PC-3 (cell line): ENCODE measurements at regions of chr18 and their contacts with region 1.

Region 1: GRCh38 chr18:40868110-40868858 is 1086.8 kb upstream of the PIK3C3 start:
- DNase-seq: peak; percentile 77
- ATAC-seq: peak; percentile 95
- H3K4me3 ChIP-seq: no peak overlapping the region
- H3K27ac ChIP-seq: peak overlapping the region; percentile 98
- H3K4me1 ChIP-seq: peaks cover 18% of the 10 kb centered on the region
- H3K27me3 ChIP-seq: no peaks in the 10 kb centered on the region
- CTCF ChIP-seq: no peak

Region 2: DNA sequence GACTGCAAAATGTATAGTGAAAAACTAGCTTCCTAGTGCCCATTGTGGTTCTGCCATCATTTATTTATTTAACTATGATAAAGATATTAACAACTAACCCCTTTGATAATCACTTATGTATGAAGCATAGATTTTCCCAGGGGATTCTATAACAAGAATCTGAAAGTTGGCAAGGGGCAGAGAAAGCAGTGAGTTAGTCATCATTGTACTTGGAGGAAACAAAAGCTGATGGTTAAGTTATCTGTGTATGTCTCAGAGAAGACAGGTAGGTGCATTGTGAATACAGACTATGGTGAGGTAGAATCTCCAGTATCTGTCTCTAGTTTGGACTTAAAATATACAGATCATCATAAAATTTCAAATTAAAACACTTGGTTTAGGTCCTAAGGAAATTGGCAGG is 1143.6 kb before region 1 on chr18:
- CTCF ChIA-PET with region 1: no interaction called
- POLR2A ChIA-PET with region 1: no interaction called
- intact Hi-C with region 1: no loop called
- DNase-seq: no peak
- ATAC-seq: no peak
- H3K4me3 ChIP-seq: no peak overlapping the region
- H3K27ac ChIP-seq: no peak overlapping the region
- H3K4me1 ChIP-seq: no peaks in the 10 kb centered on the region
- H3K27me3 ChIP-seq: no peaks in the 10 kb centered on the region
- CTCF ChIP-seq: no peak

Region 3: GRCh38 chr18:40789286-40789685 is 79.0 kb before region 1 on chr18:
- CTCF ChIA-PET with region 1: no interaction called
- POLR2A ChIA-PET with region 1: no interaction called
- intact Hi-C with region 1: no loop called
- DNase-seq: peak; percentile 2
- ATAC-seq: no peak
- H3K4me3 ChIP-seq: no peak overlapping the region
- H3K27ac ChIP-seq: no peak overlapping the region
- H3K4me1 ChIP-seq: no peaks in the 10 kb centered on the region
- H3K27me3 ChIP-seq: no peaks in the 10 kb centered on the region
- CTCF ChIP-seq: no peak

Region 4: DNA sequence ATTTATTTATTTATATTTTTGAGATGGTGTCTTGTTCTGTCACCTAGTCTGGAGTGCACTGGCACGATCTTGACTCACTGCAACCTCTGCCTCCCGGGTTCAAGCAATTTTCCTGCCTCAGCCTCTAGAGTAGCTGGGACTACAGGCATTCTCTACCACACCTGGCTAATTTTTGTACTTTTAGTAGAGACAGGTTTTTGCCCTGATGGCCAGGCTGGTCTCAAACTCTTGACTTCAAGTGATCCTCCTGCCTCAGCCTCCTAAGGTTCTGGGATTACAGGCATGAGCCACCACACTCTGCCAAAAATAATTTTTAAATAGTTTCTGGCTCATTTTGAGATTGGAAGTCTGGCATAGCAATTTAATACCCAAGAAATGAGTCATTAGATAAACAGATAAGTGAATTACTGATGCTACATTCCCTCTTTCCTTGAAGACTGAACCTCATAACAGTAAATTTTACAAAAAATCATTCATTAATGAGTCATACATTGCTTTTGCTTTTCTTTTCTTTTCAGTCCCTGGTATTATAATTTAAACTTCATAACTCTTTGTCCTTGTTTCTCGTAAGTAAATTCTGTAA is 205.2 kb after region 1 on chr18:
- CTCF ChIA-PET with region 1: no interaction called
- POLR2A ChIA-PET with region 1: no interaction called
- intact Hi-C with region 1: loop called (anchors 2 kb)
- DNase-seq: peak; percentile 67
- ATAC-seq: peak; percentile 43
- H3K4me3 ChIP-seq: no peak overlapping the region
- H3K27ac ChIP-seq: peak overlapping the region; percentile 83; the same call in 1 of the 2 replicates
- H3K4me1 ChIP-seq: peaks cover 42% of the 10 kb centered on the region
- H3K27me3 ChIP-seq: no peaks in the 10 kb centered on the region
- CTCF ChIP-seq: no peak

Region 5: GRCh38 chr18:41244591-41245037 is 376.3 kb after region 1 on chr18:
- CTCF ChIA-PET with region 1: no interaction called
- POLR2A ChIA-PET with region 1: no interaction called
- intact Hi-C with region 1: no loop called
- DNase-seq: no peak
- ATAC-seq: no peak
- H3K4me3 ChIP-seq: no peak overlapping the region
- H3K27ac ChIP-seq: no peak overlapping the region
- H3K4me1 ChIP-seq: no peaks in the 10 kb centered on the region
- H3K27me3 ChIP-seq: no peaks in the 10 kb centered on the region
- CTCF ChIP-seq: no peak

Region 6: GRCh38 chr18:41378598-41378997 is 510.3 kb after region 1 on chr18:
- CTCF ChIA-PET with region 1: no interaction called
- POLR2A ChIA-PET with region 1: no interaction called
- intact Hi-C with region 1: loop called (anchors 10 kb)
- DNase-seq: peak; percentile 50
- ATAC-seq: peak; percentile 78
- H3K4me3 ChIP-seq: no peak overlapping the region
- H3K27ac ChIP-seq: no peak overlapping the region
- H3K4me1 ChIP-seq: no peaks in the 10 kb centered on the region
- H3K27me3 ChIP-seq: no peaks in the 10 kb centered on the region
- CTCF ChIP-seq: peak; percentile 51